Activated naive CD4-positive, alpha-beta T cell treated with anti-CD3 and anti-CD28 coated beads for 36 hours (primary cell): ENCODE measurements at regions of chr2 and their contacts with region 1.

Region 1: GRCh38 chr2:27638037-27638637 is 9.3 kb downstream of the GPN1 start:
- DNase-seq: peak; percentile 17
- H3K4me3 Mint-ChIP-seq: peak overlapping the region; percentile 28
- H3K27ac Mint-ChIP-seq: peak overlapping the region; percentile 92
- H3K4me1 Mint-ChIP-seq: peaks cover 20% of the 10 kb centered on the region
- H3K27me3 Mint-ChIP-seq: no peaks in the 10 kb centered on the region

Region 2: GRCh38 chr2:27518113-27518781 is 119.9 kb before region 1 on chr2:
- CTCF ChIA-PET with region 1: no interaction called
- intact Hi-C with region 1: no loop called
- DNase-seq: no peak
- H3K4me3 Mint-ChIP-seq: no peak overlapping the region
- H3K27ac Mint-ChIP-seq: no peak overlapping the region
- H3K4me1 Mint-ChIP-seq: no peaks in the 10 kb centered on the region
- H3K27me3 Mint-ChIP-seq: no peaks in the 10 kb centered on the region

Region 3: GRCh38 chr2:27652790-27653189 is 14.7 kb after region 1 on chr2:
- CTCF ChIA-PET with region 1: no interaction called
- intact Hi-C with region 1: loop called (anchors 1 kb)
- DNase-seq: no peak
- H3K4me3 Mint-ChIP-seq: no peak overlapping the region
- H3K27ac Mint-ChIP-seq: peak overlapping the region; percentile 41
- H3K4me1 Mint-ChIP-seq: peaks cover 24% of the 10 kb centered on the region
- H3K27me3 Mint-ChIP-seq: no peaks in the 10 kb centered on the region